Dorsolateral prefrontal cortex (tissue), 120 donors: ENCODE measurements at regions of chr12 and their contacts with region 1.

Region 1: DNA sequence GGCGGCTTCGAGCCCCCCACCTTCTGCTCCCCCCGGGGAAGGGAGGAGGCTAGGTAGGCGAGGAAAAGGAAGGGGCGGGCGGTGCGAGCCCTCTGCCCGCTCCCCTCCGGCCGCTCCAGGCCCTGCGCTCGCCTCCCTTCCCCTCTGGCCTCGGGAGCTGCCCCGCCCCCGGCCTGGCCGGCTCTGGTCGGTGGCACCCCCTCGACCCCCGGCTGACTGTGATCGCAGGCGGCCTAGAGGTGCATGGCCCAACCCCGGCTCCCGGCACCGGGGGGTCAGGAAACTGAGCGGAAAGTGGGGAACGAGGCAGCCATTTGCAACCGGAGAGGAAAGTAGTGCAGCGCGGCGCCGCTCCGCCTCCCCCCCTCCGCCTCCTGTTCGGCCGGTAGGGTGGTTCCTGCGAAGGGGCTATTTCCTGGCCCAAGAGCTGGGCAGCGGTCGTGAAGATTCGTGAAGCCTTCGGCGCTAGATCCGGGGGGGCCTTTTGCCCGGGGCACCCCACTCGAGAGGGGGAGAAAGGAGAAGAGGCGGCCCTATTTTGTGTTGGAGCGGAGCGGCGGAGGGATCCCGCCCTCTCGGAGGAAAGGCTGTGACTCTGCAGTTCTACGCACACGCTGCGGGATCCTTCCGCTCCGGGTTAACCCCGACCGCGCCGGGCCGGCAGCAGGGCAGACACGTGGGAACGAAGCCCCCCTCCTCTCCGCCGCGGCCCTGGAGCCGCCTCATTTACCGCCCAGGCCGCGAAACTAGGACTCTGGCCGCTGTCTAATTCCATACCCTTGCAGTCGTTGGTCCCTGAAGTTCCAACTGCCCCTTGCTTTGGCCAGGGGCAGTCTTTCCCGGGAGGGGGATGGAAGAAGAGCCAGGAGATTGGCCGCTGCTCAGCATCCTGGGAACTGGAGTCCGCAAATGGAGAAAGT is at the start of gene KMT2D:
- DNase-seq: peak; percentile 81 to 94 (median 90)
- H3K4me3 ChIP-seq: peak within 1 kb of the TSS; percentile 65 to 100 (median 96)
- H3K27ac ChIP-seq: peak within 1 kb of the TSS; percentile 74 to 99 (median 97)
- H3K27me3 ChIP-seq: no peaks in the 10 kb centered on the region
- CTCF ChIP-seq: peak in 38 of 56 donors; percentile 4 to 64 (median 30)
- total RNA-seq, gene KMT2D: 76.9 to 147 (median 107) TPM

Region 2: DNA sequence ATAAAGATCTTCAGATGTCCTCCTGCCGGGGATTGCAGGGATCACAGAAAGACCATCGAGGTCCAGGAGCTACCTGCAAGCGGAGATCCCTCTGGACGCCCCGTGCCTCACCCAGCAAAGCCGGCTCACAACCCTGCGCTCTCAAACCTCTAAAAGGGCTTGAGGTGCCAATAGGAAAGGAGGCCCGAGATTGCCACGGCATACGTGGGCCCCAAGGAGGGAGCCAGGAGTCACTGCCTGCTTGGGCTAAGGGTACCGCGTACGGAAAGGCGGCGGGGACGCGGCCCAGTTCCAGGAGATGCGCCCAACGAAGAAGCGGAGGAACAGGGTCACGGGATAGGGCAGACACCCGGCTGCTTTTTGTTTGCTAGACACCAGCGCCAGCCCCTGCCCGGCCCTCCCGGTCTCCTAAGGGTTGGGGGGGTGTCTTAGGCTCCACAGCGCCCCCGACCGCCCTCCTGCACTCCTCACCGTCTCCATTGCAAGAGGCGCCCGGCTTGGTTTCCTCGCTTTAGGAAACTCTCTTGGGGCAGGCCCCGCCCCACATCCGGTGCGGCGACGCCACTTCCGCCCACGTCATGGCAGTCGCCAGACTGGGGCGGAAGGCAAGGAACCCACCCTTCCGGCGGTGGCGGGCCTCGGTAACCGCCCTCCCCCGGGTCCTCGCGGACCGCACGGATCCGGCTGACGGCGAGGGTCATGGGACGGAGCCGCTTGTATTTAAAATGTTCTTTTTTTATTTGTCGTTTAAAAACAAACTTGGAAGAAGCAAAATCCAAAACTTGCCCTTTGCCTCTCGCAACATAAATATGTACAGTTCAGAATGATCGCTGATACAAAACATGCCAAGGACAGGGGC is 42.0 kb before region 1 on chr12 and contains the start of gene PRKAG1:
- intact Hi-C with region 1: loop called in 1 of 2 experiments (anchors 2 kb)
- DNase-seq: peak; percentile 92 to 99 (median 96)
- H3K4me3 ChIP-seq: peak within 1 kb of the TSS; percentile 60 to 99 (median 90)
- H3K27ac ChIP-seq: peak within 1 kb of the TSS; percentile 53 to 98 (median 89)
- H3K27me3 ChIP-seq: no peaks in the 10 kb centered on the region
- CTCF ChIP-seq: peak in 53 of 56 donors; percentile 29 to 72 (median 56)
- total RNA-seq, gene PRKAG1: 26.4 to 67.1 (median 46.4) TPM

Region 3: GRCh38 chr12:49088190-49088931 is 27.9 kb after region 1 on chr12:
- intact Hi-C with region 1: loop called in 1 of 2 experiments (anchors 2 kb)
- DNase-seq: peak; percentile 55 to 88 (median 80)
- H3K4me3 ChIP-seq: peak overlapping the region in 47 of 59 donors; percentile 5 to 55 (median 35)
- H3K27ac ChIP-seq: peak overlapping the region in 54 of 59 donors; percentile 27 to 94 (median 82)
- H3K27me3 ChIP-seq: peaks cover 0 to 43% (median 10%) of the 10 kb centered on the region in 45 donors
- CTCF ChIP-seq: peak; percentile 50 to 95 (median 92)

Region 4: GRCh38 chr12:49121047-49121696 is 60.7 kb after region 1 on chr12:
- intact Hi-C with region 1: loop called in 1 of 2 experiments (anchors 2 kb)
- DNase-seq: peak in 7 of 10 donors; percentile 37 to 64 (median 62)
- H3K4me3 ChIP-seq: no peak overlapping the region
- H3K27ac ChIP-seq: peak overlapping the region in 1 of 59 donors; percentile 44
- H3K27me3 ChIP-seq: no peaks in the 10 kb centered on the region
- CTCF ChIP-seq: peak in 55 of 56 donors; percentile 37 to 80 (median 69)

Region 5: GRCh38 chr12:49130151-49131050 is 69.9 kb after region 1 on chr12:
- intact Hi-C with region 1: loop called in 1 of 2 experiments (anchors 2 kb)
- DNase-seq: peak; percentile 88 to 96 (median 92)
- H3K4me3 ChIP-seq: peak overlapping the region; percentile 69 to 100 (median 98)
- H3K27ac ChIP-seq: peak overlapping the region; percentile 94 to 100 (median 99)
- H3K27me3 ChIP-seq: no peaks in the 10 kb centered on the region
- CTCF ChIP-seq: peak; percentile 74 to 97 (median 93)

Region 6: DNA sequence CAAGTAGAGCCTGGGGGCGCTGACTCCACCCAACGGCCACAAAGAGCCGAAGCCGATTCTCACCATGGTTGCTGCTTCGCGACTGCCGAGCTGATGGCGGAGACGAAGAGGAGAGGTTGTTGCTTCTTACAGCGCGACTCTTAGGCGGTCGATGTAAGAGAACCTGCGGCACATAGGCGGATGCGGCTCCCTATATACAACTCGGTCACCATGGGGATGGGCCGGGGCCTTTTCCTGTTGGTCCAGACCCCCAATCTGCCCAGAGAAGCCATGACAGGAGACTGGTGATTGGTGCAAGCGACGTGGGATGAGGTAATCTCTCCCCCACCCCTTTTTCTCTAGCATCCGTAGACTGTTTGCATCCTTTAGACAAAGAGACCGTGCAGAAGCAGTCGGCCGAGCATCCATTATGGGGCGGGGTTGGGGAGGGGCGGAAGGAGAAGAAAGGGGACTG is 128.4 kb after region 1 on chr12 and contains the start of gene TUBA1A:
- intact Hi-C with region 1: loop called (anchors 5 to 10 kb)
- DNase-seq: peak; percentile 93 to 100 (median 99)
- H3K4me3 ChIP-seq: peak within 1 kb of the TSS; percentile 62 to 100 (median 98)
- H3K27ac ChIP-seq: peak within 1 kb of the TSS; percentile 98 to 100 (median 100)
- H3K27me3 ChIP-seq: no peaks in the 10 kb centered on the region
- CTCF ChIP-seq: peak in 7 of 56 donors; percentile 2 to 29 (median 14)
- total RNA-seq, gene TUBA1A: 197 to 1,976 (median 609) TPM

Region 7: DNA sequence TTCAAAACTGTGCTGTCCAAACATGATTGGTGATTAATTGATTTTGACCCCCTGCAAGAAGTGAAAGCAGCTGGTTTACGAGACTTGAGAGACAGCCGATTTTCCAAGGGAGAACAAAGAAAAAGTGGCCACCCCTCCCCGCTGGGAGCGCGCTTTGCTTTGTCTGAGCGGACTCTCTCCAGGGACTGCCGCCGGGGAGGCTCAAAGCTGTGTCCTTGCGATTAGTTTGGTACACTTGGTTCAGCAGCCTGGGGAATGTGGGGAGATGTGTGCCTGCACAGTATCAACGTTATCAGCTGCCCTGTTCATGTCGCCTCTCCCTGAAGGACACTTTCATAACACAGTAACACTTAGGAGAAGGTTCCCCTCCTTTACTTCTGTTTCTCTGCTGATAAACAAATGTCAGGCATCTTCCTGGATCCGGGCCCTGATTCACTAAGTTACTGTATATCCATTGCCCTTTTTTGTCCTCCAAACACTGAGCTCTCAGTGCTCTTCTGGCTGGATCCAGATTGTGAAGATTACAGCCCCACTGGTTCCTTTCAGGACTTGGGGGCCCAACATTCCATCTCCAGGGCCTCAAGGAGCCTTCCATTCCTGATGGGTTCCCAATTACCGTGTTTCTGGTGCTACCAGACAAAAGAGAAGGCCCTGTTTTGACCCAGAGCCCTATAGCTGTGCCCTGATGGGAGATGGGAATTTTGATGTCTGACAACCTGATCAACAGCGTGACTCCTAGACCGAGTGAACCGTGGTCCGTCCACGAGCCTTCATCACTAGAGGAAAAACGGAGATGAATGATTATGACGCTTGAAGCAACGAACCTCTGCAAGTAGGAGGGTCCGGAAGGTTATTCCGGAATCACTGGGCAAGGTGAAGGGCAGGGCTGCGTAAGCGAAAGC is 172.7 kb after region 1 on chr12:
- intact Hi-C with region 1: loop called (anchors 1 to 2 kb)
- DNase-seq: peak; percentile 49 to 88 (median 85)
- H3K4me3 ChIP-seq: peak overlapping the region; percentile 24 to 86 (median 68)
- H3K27ac ChIP-seq: peak overlapping the region; percentile 95 to 100 (median 99)
- H3K27me3 ChIP-seq: no peaks in the 10 kb centered on the region
- CTCF ChIP-seq: peak in 49 of 56 donors; percentile 6 to 63 (median 37)

Region 8: DNA sequence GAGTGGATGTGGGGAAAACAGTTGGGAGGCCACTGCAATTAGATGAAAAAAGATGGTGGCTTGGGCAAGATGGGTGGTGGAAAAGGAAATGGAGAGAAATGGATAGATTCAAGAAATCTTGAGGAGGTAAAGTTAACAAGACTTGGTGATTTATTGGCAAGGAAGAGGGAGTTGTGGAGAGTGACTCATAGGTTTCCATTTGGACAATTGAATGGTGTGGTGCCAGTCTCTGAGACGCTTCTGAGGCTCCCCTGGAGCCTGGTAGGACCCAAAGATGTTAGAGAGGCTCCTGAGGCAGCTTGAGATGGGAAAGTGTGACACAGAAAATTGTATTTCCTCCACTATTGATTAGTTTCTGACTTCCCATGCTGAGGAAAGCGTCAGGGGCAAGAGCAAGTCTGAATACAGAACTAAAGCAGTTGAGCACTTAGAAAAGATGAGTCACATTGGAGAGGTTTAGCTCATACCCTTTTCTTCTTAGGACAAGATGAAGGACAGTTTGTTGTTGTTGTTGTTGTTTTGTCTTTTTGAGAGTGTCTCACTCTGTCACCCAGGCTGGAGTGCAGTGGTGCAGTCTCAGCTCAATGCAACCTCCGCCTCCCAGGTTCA is 567.4 kb after region 1 on chr12:
- intact Hi-C with region 1: no loop called
- DNase-seq: no peak
- H3K4me3 ChIP-seq: no peak overlapping the region
- H3K27ac ChIP-seq: peak overlapping the region in 1 of 59 donors; percentile 36
- H3K27me3 ChIP-seq: no peaks in the 10 kb centered on the region
- CTCF ChIP-seq: no peak